Activated B cell treated with CpG ODN at 0.5 μM for 24 hours (primary cell): ENCODE measurements at regions of chr19 and their contacts with region 1.

Region 1: DNA sequence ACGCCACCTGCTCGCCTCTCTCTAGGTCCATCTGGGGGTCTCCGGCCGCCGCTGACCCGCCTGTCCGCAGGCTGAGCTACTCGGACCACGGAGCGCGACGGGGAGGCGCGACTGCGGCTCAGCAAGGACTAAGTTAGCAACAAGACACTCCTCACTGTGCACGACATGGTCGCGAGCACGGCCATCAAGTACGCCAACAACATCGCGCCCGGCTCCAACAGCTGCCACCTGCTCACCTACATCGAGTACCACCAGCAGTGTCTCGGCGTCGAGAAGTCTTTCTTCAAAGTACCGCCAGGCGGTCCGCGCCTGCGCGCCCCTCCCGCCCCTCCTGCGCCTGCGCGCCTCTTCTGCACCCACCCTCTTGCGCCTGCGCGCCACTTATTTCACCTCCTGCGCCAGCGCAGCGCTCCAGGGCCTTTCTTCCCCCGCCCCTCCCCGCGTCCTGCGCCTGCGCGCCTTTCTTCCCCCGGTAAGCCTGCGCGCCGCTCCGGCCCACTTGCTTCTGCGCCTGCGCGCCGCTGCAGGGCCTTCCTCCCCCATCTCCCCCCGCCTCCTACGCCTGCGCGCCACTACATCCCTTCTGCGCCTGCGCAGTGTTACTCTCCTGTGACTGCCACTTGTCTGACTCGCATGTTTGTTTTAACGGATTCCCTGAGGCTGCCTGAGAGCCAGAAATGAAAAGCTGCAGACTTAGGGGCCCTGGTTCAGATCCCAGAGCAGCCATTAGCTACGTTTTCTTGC is 63.9 kb downstream of the ACSBG2 start:
- DNase-seq: peak; percentile 99
- ATAC-seq: peak; percentile 86
- H3K4me3 Mint-ChIP-seq: peak overlapping the region; percentile 95
- H3K27ac Mint-ChIP-seq: peak overlapping the region; percentile 85
- H3K4me1 Mint-ChIP-seq: peaks cover 33% of the 10 kb centered on the region
- H3K27me3 Mint-ChIP-seq: no peaks in the 10 kb centered on the region
- CTCF ChIP-seq: no peak

Region 2: GRCh38 chr19:6150289-6150688 is 49.1 kb before region 1 on chr19:
- CTCF ChIA-PET with region 1: no interaction called
- POLR2A ChIA-PET with region 1: interaction called, 12 read pairs
- intact Hi-C with region 1: no loop called
- DNase-seq: no peak
- ATAC-seq: no peak
- H3K4me3 Mint-ChIP-seq: no peak overlapping the region
- H3K27ac Mint-ChIP-seq: no peak overlapping the region
- H3K4me1 Mint-ChIP-seq: no peaks in the 10 kb centered on the region
- H3K27me3 Mint-ChIP-seq: peaks cover 4% of the 10 kb centered on the region
- CTCF ChIP-seq: no peak